GM18951 (cell line): ENCODE measurements at regions of chr2 and their contacts with region 1.

Region 1: DNA sequence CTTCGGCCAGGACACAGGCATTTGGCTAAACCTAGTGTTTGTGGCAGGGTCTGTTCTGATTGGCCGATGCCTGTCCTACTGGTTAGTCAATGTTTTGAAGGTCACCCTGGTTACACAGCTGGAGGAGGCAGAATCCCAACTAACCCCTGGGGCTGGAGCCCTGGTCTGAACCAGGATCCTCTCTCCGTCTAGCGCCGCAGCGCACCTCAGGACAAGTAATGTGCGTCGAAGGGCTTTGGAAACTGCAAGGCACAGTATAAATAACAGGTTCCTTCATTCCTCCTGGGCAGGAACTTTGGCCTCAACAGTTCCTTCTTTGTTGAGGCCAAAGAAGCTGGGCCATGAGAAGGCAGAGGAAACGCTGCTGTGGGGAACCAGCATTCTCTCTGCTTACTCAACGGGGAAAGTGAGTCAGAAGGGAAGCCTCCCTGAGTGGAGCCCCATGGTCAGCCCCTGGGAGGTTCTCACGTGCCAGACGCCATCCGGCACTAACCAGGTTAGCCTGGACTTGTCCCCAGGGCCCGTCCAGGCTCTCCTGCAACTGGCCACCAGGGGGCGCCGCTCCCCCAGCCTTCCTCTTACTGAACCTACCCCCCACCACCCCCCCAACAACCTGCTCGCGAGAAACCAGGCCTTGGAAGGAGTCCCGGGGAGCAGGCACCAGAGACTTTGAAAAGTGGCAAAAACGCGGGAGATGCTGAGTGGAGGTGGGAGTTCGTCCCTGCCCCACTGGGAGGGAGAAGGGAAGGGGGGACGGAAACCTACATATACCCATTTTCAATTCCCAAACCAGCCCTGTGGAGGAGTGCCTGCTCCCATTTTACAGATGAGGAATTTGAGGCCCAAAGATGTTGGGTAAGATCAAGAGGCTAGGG is 19.8 kb downstream of the TEX44 start:
- POLR2A ChIP-seq: peak; percentile 32

Region 2: DNA sequence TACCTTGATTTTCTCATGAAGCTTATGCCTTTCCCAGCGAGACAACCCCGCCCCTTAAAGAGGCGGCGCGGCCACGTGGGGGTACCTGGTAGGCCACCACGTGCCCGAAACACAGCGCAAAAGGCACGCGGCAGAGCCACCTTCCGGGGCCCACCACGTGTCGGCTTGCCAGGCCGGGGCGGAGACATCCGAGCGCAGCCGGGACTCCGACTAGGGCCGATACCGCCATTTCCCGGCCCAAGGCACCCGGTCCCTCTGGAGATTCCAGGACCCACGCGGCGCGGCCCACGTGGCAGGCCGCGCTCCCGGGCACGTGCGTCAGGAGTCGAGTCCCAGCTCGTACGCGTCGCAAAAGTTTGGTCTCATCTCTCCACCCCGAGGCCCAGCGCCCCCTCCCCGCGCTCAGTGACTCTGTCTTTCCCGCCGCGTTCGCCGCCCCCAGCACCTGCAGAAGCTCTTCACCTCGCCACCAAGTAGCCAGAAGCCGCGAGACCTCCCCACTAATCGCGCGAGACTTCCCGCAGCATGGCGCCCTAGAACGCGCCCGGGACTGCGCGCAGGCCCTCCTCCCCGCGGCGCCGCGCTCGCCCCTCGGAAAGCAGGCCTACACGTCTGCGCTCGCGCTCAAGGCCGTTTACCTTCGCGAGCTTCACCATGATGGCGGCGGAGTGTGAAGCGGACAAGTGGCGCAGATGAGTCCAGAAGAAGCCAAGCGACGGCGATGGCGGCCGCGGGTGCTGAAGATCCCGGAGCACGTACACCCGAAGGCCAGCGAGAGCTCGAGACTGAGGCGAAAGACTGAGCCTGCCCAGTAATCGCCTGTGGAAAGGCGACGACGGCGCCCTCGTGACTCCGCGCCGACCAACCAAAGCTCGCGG is 148.5 kb before region 1 on chr2 and contains the start of gene NCL:
- in situ Hi-C with region 1: no loop called
- POLR2A ChIP-seq: peak; percentile 99

Region 3: DNA sequence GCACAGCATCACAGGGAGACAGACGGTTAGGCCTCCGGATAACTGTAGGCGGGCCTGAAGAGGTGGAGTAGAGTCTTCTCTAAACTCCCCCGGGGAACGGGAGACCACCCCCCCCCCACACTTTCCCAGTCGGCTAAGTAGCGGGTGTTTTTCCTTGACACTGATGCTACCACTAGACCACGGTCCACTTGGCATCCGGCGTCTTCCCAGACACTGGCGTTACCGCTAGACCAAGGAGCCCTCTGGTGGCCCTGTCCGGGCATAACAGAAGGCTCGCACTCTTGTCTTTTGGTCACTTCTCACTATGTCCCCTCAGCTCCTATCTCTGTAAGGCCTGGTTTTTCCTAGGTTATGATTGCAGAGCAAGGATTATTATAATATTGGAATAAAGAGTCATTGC is 122.4 kb before region 1 on chr2:
- in situ Hi-C with region 1: no loop called
- POLR2A ChIP-seq: no peak

Region 4: GRCh38 chr2:231662028-231662810 is 49.8 kb after region 1 on chr2:
- in situ Hi-C with region 1: loop called (anchors 10 kb)
- POLR2A ChIP-seq: peak; percentile 73

Region 5: DNA sequence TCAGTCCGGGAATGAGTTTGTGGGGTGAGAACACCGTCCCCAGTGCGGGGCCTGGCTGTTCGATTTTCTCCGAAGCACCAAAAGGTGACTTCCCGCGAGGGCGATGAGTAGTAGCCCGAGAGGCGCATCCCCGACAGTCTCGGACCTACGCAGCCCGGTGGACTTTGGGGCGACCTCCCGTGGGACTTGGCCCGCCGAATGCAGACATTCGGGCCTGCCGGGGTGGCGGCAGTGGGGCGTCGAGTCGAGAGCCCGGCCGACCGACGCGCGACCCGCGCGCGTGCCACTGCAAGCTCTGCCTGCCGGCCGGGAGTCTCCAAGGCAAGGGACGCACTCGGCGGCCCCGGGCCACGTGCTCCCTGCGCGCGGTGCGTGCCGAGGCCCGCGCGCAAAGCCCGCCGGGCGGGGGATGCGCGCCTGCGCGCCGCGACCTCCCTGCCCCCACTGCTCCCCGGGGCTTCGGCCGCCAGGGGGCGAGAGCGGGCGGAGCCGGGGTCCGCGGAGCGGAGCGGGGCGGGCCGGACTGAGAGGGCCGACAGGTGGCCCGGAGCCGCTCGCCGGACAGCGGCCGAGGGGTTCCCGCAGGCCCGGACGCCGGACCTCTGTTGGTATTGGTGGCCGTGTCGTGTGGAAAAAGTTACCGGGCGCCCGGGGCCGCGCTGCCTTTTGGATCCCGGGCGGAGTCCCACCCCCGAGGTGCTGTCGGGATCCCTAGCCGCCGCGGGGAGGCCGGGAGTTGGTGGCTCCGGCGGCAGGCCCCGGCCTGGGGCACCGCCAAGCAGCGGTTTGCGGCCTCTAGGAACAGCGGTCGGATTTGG is 97.8 kb after region 1 on chr2:
- in situ Hi-C with region 1: loop called (anchors 10 kb)
- POLR2A ChIP-seq: peak; percentile 86